GM12878 (cell line): ENCODE measurements at regions of chr17 and their contacts with region 1.

Region 1: DNA sequence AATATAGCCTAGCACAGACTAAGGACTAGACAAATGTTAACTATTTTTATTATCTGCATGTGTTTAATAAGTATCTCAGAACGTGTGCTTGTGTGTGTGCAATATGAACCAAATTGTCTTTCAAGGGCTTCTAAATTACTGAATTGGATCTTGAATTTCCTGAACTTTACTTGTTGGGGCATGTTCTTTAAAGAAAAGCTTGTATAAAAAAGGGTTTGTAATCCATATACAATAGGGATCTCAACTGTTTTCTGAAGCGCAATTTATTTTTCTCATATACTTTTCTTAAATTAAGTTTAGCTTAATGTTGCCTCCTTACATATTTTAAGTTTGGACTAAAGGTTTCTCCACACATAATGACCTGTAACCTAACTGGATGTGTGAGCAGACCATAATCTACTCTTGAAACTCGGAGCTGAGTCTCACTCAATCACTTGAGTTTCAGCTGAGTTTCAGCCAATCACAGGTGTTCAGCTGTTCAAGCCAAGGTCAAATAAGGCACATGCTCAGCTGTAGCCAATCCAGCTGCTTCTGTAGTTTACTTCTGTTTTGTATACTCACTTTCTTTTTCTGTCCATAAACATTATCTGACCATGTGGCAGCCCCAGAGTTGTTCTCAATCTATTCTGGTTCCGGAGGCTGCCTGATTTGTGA is 72.3 kb downstream of the CDK5R1 start:
- DNase-seq: peak; percentile 92
- ATAC-seq: peak; percentile 97
- H3K4me3 ChIP-seq: no peak overlapping the region
- H3K27ac ChIP-seq: peak overlapping the region; percentile 94
- H3K4me1 ChIP-seq: peaks cover 43% of the 10 kb centered on the region
- H3K27me3 ChIP-seq: no peaks in the 10 kb centered on the region
- CTCF ChIP-seq: no peak
- EP300 ChIP-seq: no peak
- POLR2A ChIP-seq: no peak; the same call in 1 of the 2 replicates
- RAD21 ChIP-seq: no peak

Region 2: GRCh38 chr17:32396343-32396742 is 162.8 kb before region 1 on chr17:
- CTCF ChIA-PET with region 1: no interaction called
- POLR2A ChIA-PET with region 1: no interaction called
- RAD21 ChIA-PET with region 1: no interaction called
- SMC1A ChIA-PET with region 1: no interaction called
- in situ Hi-C with region 1: no loop called
- intact Hi-C with region 1: no loop called
- DNase-seq: no peak
- ATAC-seq: no peak
- H3K4me3 ChIP-seq: no peak overlapping the region
- H3K27ac ChIP-seq: no peak overlapping the region
- H3K4me1 ChIP-seq: no peaks in the 10 kb centered on the region
- H3K27me3 ChIP-seq: no peaks in the 10 kb centered on the region
- CTCF ChIP-seq: no peak
- EP300 ChIP-seq: no peak
- POLR2A ChIP-seq: no peak
- RAD21 ChIP-seq: no peak

Region 3: DNA sequence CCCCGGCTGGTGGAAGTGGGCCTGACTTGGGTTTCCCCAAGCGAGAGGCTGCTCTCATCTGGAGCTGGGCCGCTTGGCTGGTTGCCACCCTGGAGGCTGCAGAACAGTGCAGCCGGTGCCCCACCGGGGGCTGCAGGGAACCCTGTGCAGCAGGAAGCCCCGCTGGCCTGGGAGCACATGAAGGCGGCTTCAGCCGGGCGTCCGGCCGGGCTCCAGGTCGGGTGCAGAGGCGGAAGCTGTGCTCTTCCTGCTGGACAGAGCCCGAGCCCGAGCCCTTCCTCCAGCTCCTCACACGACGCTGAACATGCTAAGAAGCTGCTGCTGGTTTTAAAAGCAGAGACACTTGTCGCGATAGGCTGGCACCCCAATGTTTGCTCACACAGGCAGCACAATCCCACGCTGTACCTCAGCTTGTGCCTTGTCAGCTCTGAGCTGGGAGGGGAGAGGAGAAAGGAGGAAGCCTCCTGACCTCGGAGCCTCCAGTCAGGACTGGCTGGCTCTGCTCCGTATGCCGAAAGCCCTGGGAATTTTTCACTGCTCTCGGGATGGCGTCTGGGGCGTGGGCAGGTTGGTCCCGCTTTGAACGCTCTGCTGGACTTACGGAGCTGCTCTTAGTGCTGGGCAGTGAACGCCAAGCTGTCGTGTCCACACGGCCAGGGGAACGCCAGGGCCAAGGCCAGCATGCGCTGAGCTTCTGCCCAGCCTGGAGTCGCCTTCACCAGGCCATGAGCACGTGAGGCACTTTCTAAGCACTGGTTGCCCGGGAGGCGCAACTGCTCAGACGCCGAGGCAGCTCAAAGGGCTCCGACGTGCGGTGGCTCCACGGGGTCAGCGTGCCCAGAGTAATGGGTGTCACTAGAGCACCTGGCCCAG is 63.5 kb before region 1 on chr17:
- CTCF ChIA-PET with region 1: interaction called, 3 read pairs
- POLR2A ChIA-PET with region 1: interaction called, 18 read pairs
- RAD21 ChIA-PET with region 1: interaction called, 43 read pairs
- SMC1A ChIA-PET with region 1: interaction called, 60 read pairs
- in situ Hi-C with region 1: no loop called
- intact Hi-C with region 1: no loop called
- DNase-seq: no peak
- ATAC-seq: peak; percentile 49
- H3K4me3 ChIP-seq: no peak overlapping the region
- H3K27ac ChIP-seq: no peak overlapping the region
- H3K4me1 ChIP-seq: peaks cover 29% of the 10 kb centered on the region
- H3K27me3 ChIP-seq: no peaks in the 10 kb centered on the region
- CTCF ChIP-seq: no peak
- EP300 ChIP-seq: no peak
- POLR2A ChIP-seq: no peak
- RAD21 ChIP-seq: no peak

Region 4: GRCh38 chr17:32546031-32546444 is 13.1 kb before region 1 on chr17:
- CTCF ChIA-PET with region 1: interaction called, 7 read pairs
- POLR2A ChIA-PET with region 1: interaction called, 15 read pairs
- RAD21 ChIA-PET with region 1: interaction called, 20 read pairs
- SMC1A ChIA-PET with region 1: interaction called, 84 read pairs
- in situ Hi-C with region 1: no loop called
- intact Hi-C with region 1: no loop called
- DNase-seq: no peak
- ATAC-seq: no peak
- H3K4me3 ChIP-seq: no peak overlapping the region
- H3K27ac ChIP-seq: no peak overlapping the region
- H3K4me1 ChIP-seq: peaks cover 6% of the 10 kb centered on the region
- H3K27me3 ChIP-seq: no peaks in the 10 kb centered on the region
- CTCF ChIP-seq: no peak
- EP300 ChIP-seq: no peak
- POLR2A ChIP-seq: no peak
- RAD21 ChIP-seq: no peak

Region 5: GRCh38 chr17:32569171-32570080 is 10.3 kb after region 1 on chr17:
- CTCF ChIA-PET with region 1: interaction called, 11 read pairs
- POLR2A ChIA-PET with region 1: interaction called, 19 read pairs
- RAD21 ChIA-PET with region 1: interaction called, 21 read pairs
- SMC1A ChIA-PET with region 1: interaction called, 84 read pairs
- in situ Hi-C with region 1: no loop called
- intact Hi-C with region 1: no loop called
- DNase-seq: peak; percentile 90
- ATAC-seq: peak; percentile 81
- H3K4me3 ChIP-seq: no peak overlapping the region
- H3K27ac ChIP-seq: peak overlapping the region; percentile 99
- H3K4me1 ChIP-seq: peaks cover 51% of the 10 kb centered on the region
- H3K27me3 ChIP-seq: no peaks in the 10 kb centered on the region
- CTCF ChIP-seq: 0 out of 6 replicates have a peak, but pooled peaks of 1 of the 3 experiments have one; percentile 5
- EP300 ChIP-seq: peak; percentile 36 to 50; a peak in 3 of 4 replicates
- POLR2A ChIP-seq: no peak
- RAD21 ChIP-seq: no peak; the same call in none of the 2 replicates

Region 6: DNA sequence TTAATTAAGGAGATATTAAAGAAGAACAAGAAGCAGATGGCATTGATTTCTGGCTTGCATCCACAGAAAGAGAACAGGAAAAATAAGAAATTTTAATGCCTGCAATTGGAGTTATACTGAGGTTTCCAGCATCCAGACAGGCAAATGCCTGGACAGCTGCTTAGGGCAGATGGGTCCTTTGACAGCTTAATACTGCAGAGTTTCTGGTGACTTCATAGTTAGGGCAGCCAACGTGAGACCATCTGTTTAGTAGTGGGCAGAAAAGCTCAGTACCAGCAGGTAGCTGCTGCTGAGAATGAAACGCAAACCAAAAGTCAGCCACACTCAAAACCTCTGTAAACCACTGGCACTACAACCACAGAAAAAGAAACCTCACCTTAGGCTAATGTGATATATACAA is 37.5 kb after region 1 on chr17:
- CTCF ChIA-PET with region 1: no interaction called
- POLR2A ChIA-PET with region 1: no interaction called
- RAD21 ChIA-PET with region 1: interaction called, 3 read pairs
- SMC1A ChIA-PET with region 1: interaction called, 14 read pairs
- in situ Hi-C with region 1: no loop called
- intact Hi-C with region 1: no loop called
- DNase-seq: peak; percentile 62
- ATAC-seq: peak; percentile 98
- H3K4me3 ChIP-seq: no peak overlapping the region
- H3K27ac ChIP-seq: no peak overlapping the region
- H3K4me1 ChIP-seq: peaks cover 15% of the 10 kb centered on the region
- H3K27me3 ChIP-seq: no peaks in the 10 kb centered on the region
- CTCF ChIP-seq: no peak
- EP300 ChIP-seq: no peak
- POLR2A ChIP-seq: no peak
- RAD21 ChIP-seq: no peak